ENCODE measurements at regions of chr15 and their contacts with region 1.

Region 1: GRCh38 chr15:57527382-57528091 is 64.2 kb upstream of the MYZAP start:
- DNase-seq: peak; percentile 25
- ATAC-seq: peak; percentile 99
- H3K4me3 Mint-ChIP-seq: no peak overlapping the region
- H3K27ac Mint-ChIP-seq: no peak overlapping the region
- H3K4me1 Mint-ChIP-seq: peaks cover 11% of the 10 kb centered on the region
- H3K27me3 Mint-ChIP-seq: peaks cover 3% of the 10 kb centered on the region
- CTCF ChIP-seq: no peak

Region 2: GRCh38 chr15:56491110-56491722 is 1036.3 kb before region 1 on chr15:
- CTCF ChIA-PET with region 1: interaction called, 40 read pairs
- POLR2A ChIA-PET with region 1: no interaction called
- intact Hi-C with region 1: loop called (anchors 1 kb)
- DNase-seq: no peak
- ATAC-seq: peak; percentile 90
- H3K4me3 Mint-ChIP-seq: no peak overlapping the region
- H3K27ac Mint-ChIP-seq: no peak overlapping the region
- H3K4me1 Mint-ChIP-seq: no peaks in the 10 kb centered on the region
- H3K27me3 Mint-ChIP-seq: no peaks in the 10 kb centered on the region
- CTCF ChIP-seq: no peak

Region 3: GRCh38 chr15:56496635-56497034 is 1030.9 kb before region 1 on chr15:
- CTCF ChIA-PET with region 1: interaction called, 40 read pairs
- POLR2A ChIA-PET with region 1: no interaction called
- intact Hi-C with region 1: loop called (anchors 1 kb)
- DNase-seq: no peak
- ATAC-seq: peak; percentile 81
- H3K4me3 Mint-ChIP-seq: peak overlapping the region; percentile 20
- H3K27ac Mint-ChIP-seq: no peak overlapping the region
- H3K4me1 Mint-ChIP-seq: peaks cover 4% of the 10 kb centered on the region
- H3K27me3 Mint-ChIP-seq: no peaks in the 10 kb centered on the region
- CTCF ChIP-seq: no peak

Region 4: GRCh38 chr15:56821721-56822425 is 705.7 kb before region 1 on chr15:
- CTCF ChIA-PET with region 1: interaction called, 9 read pairs
- POLR2A ChIA-PET with region 1: no interaction called
- intact Hi-C with region 1: loop called (anchors 1 kb)
- DNase-seq: no peak
- ATAC-seq: peak; percentile 68
- H3K4me3 Mint-ChIP-seq: no peak overlapping the region
- H3K27ac Mint-ChIP-seq: no peak overlapping the region
- H3K4me1 Mint-ChIP-seq: peaks cover 4% of the 10 kb centered on the region
- H3K27me3 Mint-ChIP-seq: no peaks in the 10 kb centered on the region
- CTCF ChIP-seq: peak; percentile 16

Region 5: GRCh38 chr15:57340682-57341259 is 186.8 kb before region 1 on chr15:
- CTCF ChIA-PET with region 1: interaction called, 186 read pairs
- POLR2A ChIA-PET with region 1: no interaction called
- intact Hi-C with region 1: loop called (anchors 1 kb)
- DNase-seq: no peak
- ATAC-seq: peak; percentile 58
- H3K4me3 Mint-ChIP-seq: no peak overlapping the region
- H3K27ac Mint-ChIP-seq: no peak overlapping the region
- H3K4me1 Mint-ChIP-seq: peaks cover 2% of the 10 kb centered on the region
- H3K27me3 Mint-ChIP-seq: peaks cover 9% of the 10 kb centered on the region
- CTCF ChIP-seq: peak; percentile 79

Region 6: DNA sequence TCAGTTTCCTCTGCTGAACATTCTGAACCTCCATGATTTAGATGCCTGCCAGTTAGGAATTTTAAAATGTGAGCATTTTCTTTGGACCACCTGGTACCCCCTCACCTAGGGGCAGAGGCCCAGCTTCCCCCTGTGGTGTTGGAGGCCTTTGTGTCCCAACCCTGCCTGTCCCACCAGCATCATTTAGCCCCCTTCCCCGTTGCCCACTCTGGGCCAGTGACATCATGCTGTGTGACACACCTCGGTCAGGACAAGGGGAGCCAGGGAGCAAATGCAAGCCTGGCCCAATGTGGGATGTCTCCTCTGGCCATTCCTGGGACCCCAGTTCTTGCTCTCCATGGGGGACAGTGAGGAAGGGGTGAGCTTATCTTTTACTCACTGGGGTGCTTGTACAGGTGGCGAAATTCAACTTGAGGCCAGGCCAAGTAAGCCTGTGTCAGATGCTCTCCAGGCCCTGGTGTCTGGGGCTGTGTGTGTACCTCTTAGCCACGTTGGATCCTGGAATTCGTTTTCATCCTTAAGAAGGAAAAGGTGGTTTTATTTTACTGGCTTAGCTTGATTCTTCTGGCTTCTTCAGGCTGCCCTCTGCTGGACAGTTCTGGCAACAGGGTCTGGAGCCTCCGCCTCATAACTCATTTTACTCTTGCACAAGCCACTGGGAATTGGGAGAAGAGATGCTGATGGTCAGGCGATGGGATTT is 14.4 kb after region 1 on chr15:
- CTCF ChIA-PET with region 1: interaction called, 25 read pairs
- POLR2A ChIA-PET with region 1: no interaction called
- intact Hi-C with region 1: no loop called
- DNase-seq: no peak
- ATAC-seq: no peak
- H3K4me3 Mint-ChIP-seq: no peak overlapping the region
- H3K27ac Mint-ChIP-seq: no peak overlapping the region
- H3K4me1 Mint-ChIP-seq: no peaks in the 10 kb centered on the region
- H3K27me3 Mint-ChIP-seq: peaks cover 6% of the 10 kb centered on the region
- CTCF ChIP-seq: no peak

Region 7: GRCh38 chr15:57692709-57693108 is 165.2 kb after region 1 on chr15:
- CTCF ChIA-PET with region 1: no interaction called
- POLR2A ChIA-PET with region 1: no interaction called
- intact Hi-C with region 1: no loop called
- DNase-seq: no peak
- ATAC-seq: no peak
- H3K4me3 Mint-ChIP-seq: no peak overlapping the region
- H3K27ac Mint-ChIP-seq: no peak overlapping the region
- H3K4me1 Mint-ChIP-seq: no peaks in the 10 kb centered on the region
- H3K27me3 Mint-ChIP-seq: peaks cover 26% of the 10 kb centered on the region
- CTCF ChIP-seq: no peak

Measured in activated B cell treated with CpG ODN at 0.5 μM for 24 hours (primary cell).